ENCODE measurements at regions of chr2 and their contacts with region 1.

Region 1: GRCh38 chr2:62505750-62506420 is at the start of gene TMEM17:
- DNase-seq: peak; percentile 90
- H3K4me3 ChIP-seq: peak within 1 kb of the TSS; percentile 81
- H3K27ac ChIP-seq: peak within 1 kb of the TSS; percentile 77
- H3K4me1 ChIP-seq: no peaks in the 10 kb centered on the region
- H3K27me3 ChIP-seq: no peaks in the 10 kb centered on the region
- CTCF ChIP-seq: no peak
- total RNA-seq, gene TMEM17: 0.35 to 0.74 TPM

Region 2: DNA sequence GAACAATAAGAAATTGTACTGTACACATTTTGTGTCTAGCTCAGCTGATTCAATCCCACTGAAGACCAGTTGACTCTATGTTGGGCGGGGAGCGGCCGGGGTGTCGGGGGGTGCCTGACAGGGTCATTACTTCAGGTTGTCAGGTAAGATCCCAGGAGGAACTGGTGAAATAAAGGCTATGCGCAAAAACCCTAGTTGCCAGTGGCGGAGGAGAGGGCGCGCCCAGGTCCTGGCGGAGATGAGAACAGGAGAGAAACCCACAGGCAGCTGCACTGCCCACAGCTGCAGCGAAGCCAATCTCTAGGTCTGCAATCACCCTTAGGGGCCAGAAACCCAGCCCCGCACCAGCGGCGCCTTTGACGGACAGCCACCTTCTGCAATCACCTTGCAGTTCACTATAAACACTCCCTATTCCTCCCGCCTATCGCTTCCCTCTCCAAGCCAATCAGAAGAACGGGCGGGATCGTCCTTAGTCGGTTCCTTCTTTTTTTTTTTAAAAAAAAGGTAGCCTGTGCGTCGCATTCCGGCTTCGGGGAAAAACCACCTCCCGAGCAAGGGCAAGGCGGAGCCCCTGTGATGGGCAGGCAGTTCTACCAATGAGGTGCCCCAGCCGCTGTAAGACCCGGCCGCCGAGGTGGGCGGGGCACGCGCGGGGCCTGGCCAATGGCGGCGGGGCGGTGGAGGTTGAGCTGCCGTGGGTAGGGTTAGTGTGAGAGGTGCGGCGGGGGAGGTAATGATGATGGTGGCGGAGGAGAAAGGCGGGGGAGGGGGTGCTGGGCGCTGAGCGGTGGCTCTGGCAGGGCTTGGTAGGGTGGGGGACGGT is 199.3 kb after region 1 on chr2 and contains the start of gene EHBP1:
- intact Hi-C with region 1: loop called (anchors 10 kb)
- DNase-seq: peak; percentile 99
- H3K4me3 ChIP-seq: peak within 1 kb of the TSS; percentile 78
- H3K27ac ChIP-seq: peak within 1 kb of the TSS; percentile 85
- H3K4me1 ChIP-seq: peaks cover 3% of the 10 kb centered on the region
- H3K27me3 ChIP-seq: no peaks in the 10 kb centered on the region
- CTCF ChIP-seq: no peak
- total RNA-seq, gene EHBP1: 23.6 to 32.7 TPM

Measured in colonic mucosa (tissue), 4 donors.